ENCODE measurements at regions of chr11 and their contacts with region 1.

Region 1: DNA sequence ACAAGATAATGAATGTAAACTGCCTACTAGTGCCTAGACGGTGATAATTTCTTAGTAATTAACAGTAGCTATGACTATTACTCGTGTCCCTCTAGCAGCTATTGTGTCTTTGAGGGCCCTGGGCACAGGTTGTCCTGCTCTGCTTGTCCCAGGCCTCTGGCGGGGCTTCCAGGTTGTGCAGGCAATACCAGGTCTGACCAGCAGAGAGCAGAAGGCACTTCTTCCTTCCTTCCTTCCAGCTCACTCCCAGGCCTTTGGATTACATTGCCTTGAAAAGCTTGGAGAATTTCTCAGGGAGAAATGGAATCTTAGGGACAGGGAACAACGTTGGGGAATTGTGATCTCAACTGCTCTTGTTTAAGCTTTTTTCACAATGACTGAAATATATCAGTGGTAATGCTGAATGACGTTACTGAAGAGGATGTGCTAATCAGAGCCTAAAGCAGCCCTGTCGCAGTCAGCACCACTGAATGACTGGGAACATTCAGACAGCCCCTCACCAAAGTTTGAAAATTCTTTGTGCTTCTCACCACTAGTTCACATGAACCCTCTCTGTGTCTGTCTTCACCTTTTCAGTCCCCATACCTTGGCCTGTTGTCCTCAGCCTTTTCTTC is 8.4 kb upstream of the CCKBR start:
- DNase-seq: no peak

Region 2: DNA sequence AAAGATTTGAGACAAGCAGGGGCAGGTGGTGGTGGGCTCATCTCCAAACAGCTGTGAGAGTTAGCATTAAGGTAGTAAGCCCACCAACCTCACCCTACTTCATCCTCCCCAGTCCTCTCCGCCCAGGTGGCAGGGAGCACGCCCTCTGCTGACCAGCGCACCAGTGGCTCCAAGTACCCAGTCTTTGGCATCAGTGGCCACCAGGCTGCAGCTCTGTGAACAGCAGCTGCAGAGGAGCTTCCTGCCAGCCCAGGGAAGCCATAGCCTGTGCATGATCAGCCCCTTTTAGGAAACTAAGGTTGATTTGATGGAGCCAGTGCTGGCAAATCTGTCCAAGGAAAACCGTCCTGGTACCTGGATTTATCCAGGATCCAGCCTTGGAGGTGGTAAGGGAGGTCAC is 47.4 kb after region 1 on chr11:
- intact Hi-C with region 1: loop called (anchors 5 kb)
- DNase-seq: no peak

Region 3: GRCh38 chr11:6353367-6353987 is 102.2 kb after region 1 on chr11:
- intact Hi-C with region 1: loop called (anchors 2 kb)
- DNase-seq: no peak